ENCODE measurements at regions of chr18 and their contacts with region 1.

Region 1: DNA sequence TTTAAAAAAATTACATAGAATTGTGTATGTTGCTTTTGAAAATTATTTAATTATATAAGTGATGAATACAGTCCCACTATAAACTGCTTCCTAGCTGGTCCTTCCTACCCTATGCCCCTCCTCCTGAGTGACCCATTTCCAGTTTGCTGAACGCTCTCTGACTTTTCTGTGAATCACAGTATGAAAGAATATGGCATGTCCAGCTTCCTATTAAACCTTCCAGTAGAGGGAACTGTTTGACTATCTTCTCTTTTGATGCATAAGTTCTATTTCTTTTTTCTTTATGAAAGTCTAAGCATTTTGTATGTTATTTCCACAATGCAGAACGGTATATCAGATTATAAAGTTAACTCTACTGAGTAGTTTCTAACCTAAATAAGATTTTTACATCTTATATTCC is 41.3 kb downstream of the PSMG2 start:
- H3K4me3 Mint-ChIP-seq: no peak overlapping the region
- H3K27ac Mint-ChIP-seq: no peak overlapping the region
- H3K4me1 Mint-ChIP-seq: peaks cover 5% of the 10 kb centered on the region
- H3K27me3 Mint-ChIP-seq: peaks cover under 1% of the 10 kb centered on the region

Region 2: GRCh38 chr18:12890506-12890905 is 146.4 kb after region 1 on chr18:
- intact Hi-C with region 1: loop called (anchors 1 kb)
- H3K4me3 Mint-ChIP-seq: no peak overlapping the region
- H3K27ac Mint-ChIP-seq: peak overlapping the region; percentile 4
- H3K4me1 Mint-ChIP-seq: peaks cover 11% of the 10 kb centered on the region
- H3K27me3 Mint-ChIP-seq: peaks cover 7% of the 10 kb centered on the region